ENCODE measurements at regions of chr7 and their contacts with region 1.

Region 1: DNA sequence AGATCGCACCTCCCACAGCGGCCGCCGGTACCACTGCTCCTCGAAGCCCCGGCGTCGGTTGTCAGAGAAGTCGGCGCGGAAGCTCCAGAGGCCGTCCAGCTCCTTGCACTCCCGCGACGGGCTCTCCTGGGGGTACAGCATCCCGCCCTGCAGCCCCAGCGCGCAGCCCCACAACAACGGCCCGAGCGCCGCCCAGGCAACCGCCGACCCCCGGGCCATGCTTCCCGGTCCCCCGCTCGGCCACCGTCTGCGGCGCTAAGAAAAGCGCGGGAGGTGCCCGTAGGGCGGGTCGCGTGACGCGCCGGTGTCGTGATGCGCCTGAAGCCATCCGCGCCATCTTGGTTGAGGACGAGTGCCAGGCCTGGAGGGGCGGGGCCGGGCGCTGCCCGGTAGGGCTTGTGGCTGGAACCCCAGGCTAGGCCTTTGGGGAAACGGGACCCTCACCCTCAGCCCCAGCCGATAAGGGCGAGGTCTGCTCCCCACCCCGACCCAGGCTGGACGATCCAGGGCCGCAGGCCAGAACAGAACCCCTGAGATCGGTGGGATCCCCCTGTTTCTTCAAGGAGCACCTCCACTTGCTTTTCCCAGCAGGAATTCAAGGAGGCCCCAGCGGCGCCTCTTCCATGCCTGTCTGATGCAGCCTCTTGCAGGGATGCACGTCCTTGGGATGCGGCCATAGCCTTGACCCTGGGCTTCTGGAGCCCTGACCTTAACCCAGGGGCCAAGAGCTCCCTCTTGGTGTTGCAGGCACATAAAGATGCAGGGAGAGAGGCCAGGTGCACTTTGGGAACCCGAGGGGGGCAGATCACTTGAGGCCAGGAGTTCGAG is at the start of gene GUSB:
- DNase-seq: peak; percentile 93 to 96
- ATAC-seq: peak; percentile 97 to 100 (median 98)
- H3K4me3 ChIP-seq: peak within 1 kb of the TSS; percentile 85
- H3K27ac ChIP-seq: peak within 1 kb of the TSS; percentile 80
- H3K4me1 ChIP-seq: peaks cover 13% of the 10 kb centered on the region
- H3K27me3 ChIP-seq: no peaks in the 10 kb centered on the region
- CTCF ChIP-seq: no peak
- total RNA-seq, gene GUSB: 9.3 to 18.8 (median 11.9) TPM

Region 2: DNA sequence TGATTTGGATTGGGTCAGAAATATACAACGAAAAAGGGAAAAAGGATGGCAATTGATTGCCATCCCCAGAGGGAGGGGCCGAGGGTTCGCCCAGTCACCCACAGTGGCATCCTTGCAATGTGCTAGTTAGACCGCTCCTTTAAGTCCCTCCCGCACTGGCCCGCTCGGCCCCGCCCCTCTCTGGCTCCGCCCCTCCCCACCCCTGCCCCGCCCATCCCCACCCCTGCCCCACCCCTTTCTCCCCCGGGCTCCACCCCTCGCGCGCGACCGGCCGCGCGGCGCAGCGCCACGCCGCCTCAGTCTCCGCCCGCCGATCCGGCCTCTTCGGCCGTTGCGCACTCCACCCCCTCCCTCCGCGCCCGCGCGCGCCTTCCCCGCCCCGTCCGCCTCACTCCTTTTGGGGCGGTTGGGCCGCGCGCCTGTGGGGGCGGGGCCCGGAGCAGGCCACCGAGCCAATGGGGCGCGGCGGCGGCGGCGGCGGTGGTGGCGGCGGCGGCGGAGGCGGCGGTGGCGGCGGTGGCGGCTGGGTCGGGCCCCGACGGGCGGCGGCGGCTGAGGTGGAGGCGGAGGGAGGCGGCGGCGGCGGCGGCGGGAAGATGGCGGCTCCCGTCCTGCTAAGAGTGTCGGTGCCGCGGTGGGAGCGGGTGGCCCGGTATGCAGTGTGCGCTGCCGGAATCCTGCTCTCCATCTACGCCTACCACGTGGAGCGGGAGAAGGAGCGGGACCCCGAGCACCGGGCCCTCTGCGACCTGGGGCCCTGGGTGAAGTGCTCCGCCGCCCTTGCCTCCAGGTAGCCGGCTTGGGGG is 109.2 kb before region 1 on chr7 and contains the start of gene VKORC1L1:
- intact Hi-C with region 1: loop called in 1 of 2 experiments (anchors 10 kb)
- DNase-seq: peak; percentile 97 to 99
- ATAC-seq: peak; percentile 97 to 99 (median 98)
- H3K4me3 ChIP-seq: peak within 1 kb of the TSS; percentile 83
- H3K27ac ChIP-seq: peak within 1 kb of the TSS; percentile 80
- H3K4me1 ChIP-seq: no peaks in the 10 kb centered on the region
- H3K27me3 ChIP-seq: no peaks in the 10 kb centered on the region
- CTCF ChIP-seq: no peak
- total RNA-seq, gene VKORC1L1: 17.0 to 24.4 (median 21.2) TPM

Region 3: DNA sequence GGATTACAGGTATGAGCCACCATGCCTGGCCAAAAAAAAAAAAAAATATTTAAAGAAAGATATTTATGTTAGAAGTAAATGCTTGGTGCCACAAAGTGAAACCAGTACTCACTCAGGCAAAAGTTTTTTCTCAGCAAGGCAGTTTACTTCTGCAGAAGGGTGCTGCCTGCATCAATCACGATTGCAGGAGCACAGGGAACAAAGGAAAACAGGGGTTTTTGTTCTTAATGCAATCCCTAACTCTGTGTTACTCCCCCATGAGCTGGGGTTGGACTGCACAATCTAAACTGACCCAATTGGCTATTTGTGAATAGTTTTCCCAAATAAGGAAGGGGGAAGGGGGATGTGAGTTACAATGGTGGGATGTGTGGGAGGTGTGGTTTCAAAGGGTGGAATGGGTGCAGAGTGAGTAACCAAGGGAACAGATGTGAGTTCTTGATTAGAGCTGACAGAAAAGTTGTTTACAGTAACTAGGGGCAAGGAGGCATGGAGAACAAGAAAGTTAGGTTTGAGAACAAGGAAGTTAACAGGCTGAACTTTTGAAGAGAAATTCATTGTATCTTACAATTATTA is 1269.9 kb after region 1 on chr7:
- intact Hi-C with region 1: no loop called
- DNase-seq: no peak
- ATAC-seq: no peak
- H3K4me3 ChIP-seq: no peak overlapping the region
- H3K27ac ChIP-seq: no peak overlapping the region
- H3K4me1 ChIP-seq: no peaks in the 10 kb centered on the region
- H3K27me3 ChIP-seq: no peaks in the 10 kb centered on the region
- CTCF ChIP-seq: no peak

Measured in psoas muscle (tissue), 8 donors.